ENCODE measurements at regions of chr11 and their contacts with region 1.

Region 1: DNA sequence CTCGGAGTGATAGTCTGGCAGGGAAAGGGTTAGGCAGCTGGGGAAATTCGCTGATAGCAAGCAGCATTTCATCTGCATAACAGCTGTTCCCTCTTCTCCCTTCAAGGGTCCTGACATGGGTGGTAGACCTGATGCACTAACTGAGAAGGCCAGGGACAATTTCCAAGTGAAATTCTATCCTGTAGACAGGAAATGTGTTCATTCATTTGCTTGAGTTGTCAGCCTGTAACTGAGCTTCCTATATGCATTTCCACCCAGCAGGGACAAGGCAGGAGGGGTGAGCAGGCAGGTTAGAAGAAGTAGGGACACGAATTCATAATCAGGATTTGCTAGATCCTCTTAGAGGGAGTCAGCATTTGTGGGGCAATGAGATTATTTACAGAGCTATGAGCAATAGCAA is 154.3 kb upstream of the NCAM1 start:
- DNase-seq: no peak
- H3K4me3 ChIP-seq: no peak overlapping the region
- H3K27ac ChIP-seq: no peak overlapping the region
- H3K4me1 ChIP-seq: peaks cover 4 to 18% of the 10 kb centered on the region in 2 experiments; a peak in 2 of 4 replicates
- H3K27me3 ChIP-seq: no peaks in the 10 kb centered on the region
- CTCF ChIP-seq: no peak
- EP300 ChIP-seq: no peak
- RAD21 ChIP-seq: no peak

Region 2: DNA sequence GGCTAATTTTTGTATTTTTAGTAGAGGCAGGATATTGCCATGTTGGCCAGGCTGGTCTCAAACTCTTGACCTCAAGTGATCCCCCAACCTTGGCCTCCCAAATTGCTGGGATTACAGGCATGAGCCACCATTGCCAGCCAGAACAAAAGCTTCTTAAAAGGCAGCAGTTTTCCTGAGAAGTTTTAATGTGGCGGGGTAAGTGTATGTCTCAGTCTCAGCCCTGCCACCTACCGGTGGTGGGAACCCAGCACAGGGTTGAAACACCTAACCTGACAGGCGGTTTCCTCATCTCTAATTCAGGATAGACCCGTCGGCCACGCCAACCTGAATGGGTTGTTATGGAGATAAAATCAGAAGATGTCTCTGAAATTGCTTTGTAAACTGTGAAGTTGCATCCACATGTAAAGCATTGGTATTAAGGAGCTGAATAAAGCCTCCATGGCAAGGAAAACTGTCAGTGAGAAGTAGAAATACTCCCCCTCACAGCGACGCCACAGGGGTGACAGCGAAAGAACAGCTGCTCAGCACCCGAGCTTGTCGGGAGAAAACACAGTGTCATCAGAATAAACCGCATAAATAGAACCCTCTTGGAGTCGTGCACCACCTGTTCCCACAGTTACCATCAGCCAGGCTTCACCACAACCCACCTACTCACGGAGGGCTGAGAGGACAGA is 11.6 kb before region 1 on chr11:
- CTCF ChIA-PET with region 1: interaction called, 12 read pairs
- POLR2A ChIA-PET with region 1: no interaction called
- DNase-seq: peak; percentile 56
- H3K4me3 ChIP-seq: no peak overlapping the region; a peak in 1 of 4 replicates
- H3K27ac ChIP-seq: no peak overlapping the region
- H3K4me1 ChIP-seq: peaks cover 0 to 22% of the 10 kb centered on the region in 2 experiments; a peak in 1 of 4 replicates
- H3K27me3 ChIP-seq: no peaks in the 10 kb centered on the region
- CTCF ChIP-seq: peak; percentile 78
- EP300 ChIP-seq: no peak
- RAD21 ChIP-seq: peak; percentile 71

Region 3: GRCh38 chr11:112886434-112887373 is 79.8 kb after region 1 on chr11:
- CTCF ChIA-PET with region 1: no interaction called
- POLR2A ChIA-PET with region 1: no interaction called
- DNase-seq: no peak
- H3K4me3 ChIP-seq: no peak overlapping the region
- H3K27ac ChIP-seq: no peak overlapping the region
- H3K4me1 ChIP-seq: peaks cover 0 to 18% of the 10 kb centered on the region in 2 experiments; a peak in 2 of 4 replicates
- H3K27me3 ChIP-seq: no peaks in the 10 kb centered on the region; the same call in 1 of the 2 replicates
- CTCF ChIP-seq: no peak
- EP300 ChIP-seq: no peak
- RAD21 ChIP-seq: no peak